AG04449 (cell line): ENCODE measurements at regions of chr4 and their contacts with region 1.

Region 1: GRCh38 chr4:24980064-24980690 is 50.6 kb downstream of the LGI2 start:
- DNase-seq: peak; percentile 24
- H3K4me3 ChIP-seq: peak overlapping the region; percentile 35
- CTCF ChIP-seq: peak; percentile 70

Region 2: GRCh38 chr4:24488399-24489164 is 491.6 kb before region 1 on chr4:
- CTCF ChIA-PET with region 1: interaction called, 38 read pairs
- POLR2A ChIA-PET with region 1: no interaction called
- DNase-seq: no peak
- H3K4me3 ChIP-seq: no peak overlapping the region
- CTCF ChIP-seq: peak; percentile 86

Region 3: DNA sequence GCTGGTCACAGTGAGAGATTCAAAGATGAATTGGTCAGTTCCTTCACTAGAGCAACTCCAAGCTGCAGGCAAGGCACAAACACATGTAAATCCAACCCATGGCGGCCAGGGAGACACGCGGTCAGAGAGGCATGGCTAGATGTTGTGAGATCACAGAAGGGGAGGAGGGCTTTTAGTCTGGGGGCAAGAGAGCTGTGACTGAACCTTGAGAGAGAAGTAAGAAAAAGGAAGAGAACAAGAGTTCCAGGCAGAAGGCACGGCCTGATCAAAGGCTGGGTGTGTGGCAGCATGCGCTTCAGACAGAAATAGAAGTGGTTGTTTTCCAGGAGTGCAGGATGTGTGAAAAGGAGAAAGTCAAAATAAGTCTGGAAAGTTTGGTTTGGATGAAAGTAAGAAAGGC is 83.2 kb before region 1 on chr4:
- CTCF ChIA-PET with region 1: no interaction called
- POLR2A ChIA-PET with region 1: no interaction called
- DNase-seq: no peak
- H3K4me3 ChIP-seq: no peak overlapping the region
- CTCF ChIP-seq: no peak

Region 4: GRCh38 chr4:24956763-24957162 is 23.4 kb before region 1 on chr4:
- CTCF ChIA-PET with region 1: interaction called, 11 read pairs
- POLR2A ChIA-PET with region 1: no interaction called
- DNase-seq: no peak
- H3K4me3 ChIP-seq: no peak overlapping the region
- CTCF ChIP-seq: no peak

Region 5: DNA sequence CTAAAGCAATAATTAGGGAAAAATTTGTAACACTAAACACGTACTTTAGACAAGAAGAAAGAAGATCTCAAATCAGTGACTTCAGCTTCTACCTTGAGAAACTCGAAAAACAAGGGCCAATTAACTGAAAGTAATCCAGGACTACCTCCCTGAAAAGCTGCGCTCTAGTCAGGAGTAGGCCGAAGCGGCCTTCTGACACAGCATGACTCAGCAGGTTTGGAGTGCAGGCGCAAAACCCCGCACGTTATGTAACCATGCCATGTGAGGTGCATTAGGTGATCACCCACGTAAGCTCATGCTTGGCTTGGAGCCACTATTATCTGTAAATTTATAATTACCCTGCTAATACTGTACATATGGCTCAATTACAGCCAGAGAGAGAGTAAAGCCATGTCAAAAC is 14.6 kb before region 1 on chr4:
- CTCF ChIA-PET with region 1: interaction called, 14 read pairs
- POLR2A ChIA-PET with region 1: no interaction called
- DNase-seq: no peak
- H3K4me3 ChIP-seq: no peak overlapping the region
- CTCF ChIP-seq: no peak

Region 6: GRCh38 chr4:24999392-25000089 is 19.4 kb after region 1 on chr4:
- CTCF ChIA-PET with region 1: interaction called, 56 read pairs
- POLR2A ChIA-PET with region 1: no interaction called
- DNase-seq: no peak
- H3K4me3 ChIP-seq: no peak overlapping the region
- CTCF ChIP-seq: no peak